ENCODE measurements at regions of chr10 and their contacts with region 1.

Region 1: DNA sequence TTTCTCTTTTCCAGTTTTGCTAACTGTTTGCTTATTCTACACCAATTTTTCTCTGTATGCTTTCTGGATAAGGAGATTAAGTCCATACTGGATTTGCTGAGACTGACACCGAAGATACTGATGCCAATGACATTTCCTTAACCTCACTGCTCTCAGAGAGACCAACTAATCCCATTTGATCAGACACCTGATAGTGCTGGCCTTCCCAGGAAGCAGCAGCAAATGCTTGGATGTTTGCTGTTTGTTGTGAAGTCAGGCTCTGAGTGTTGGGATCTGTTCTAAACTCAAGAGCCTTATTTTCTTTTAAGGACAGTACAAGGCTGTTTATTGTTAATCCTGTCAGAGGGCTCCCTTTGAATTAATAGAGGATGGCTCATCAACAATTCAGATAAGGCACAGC is 143.3 kb downstream of the ANK3 start:
- DNase-seq: no peak
- H3K4me3 ChIP-seq: no peak overlapping the region
- CTCF ChIP-seq: no peak
- POLR2A ChIP-seq: no peak

Region 2: DNA sequence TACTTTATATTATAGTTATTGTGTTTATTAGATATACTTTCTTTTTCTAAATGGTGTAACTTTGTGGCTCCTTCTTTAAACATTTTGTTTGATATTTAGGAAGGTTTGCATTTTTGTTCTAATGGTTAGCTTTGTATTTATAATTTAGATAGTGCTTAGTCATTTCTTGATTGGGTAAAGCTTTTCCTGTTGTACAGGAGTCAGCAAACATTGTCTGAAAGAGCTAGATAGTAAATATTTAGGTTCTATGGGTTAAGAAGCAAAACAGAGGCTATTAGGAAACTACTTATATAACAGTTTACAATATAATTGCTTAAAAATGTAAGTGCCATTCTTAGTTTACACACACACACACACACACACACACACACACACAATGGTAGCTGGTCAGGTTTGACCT is 269.5 kb before region 1 on chr10:
- intact Hi-C with region 1: loop called (anchors 5 kb)
- DNase-seq: no peak
- H3K4me3 ChIP-seq: no peak overlapping the region
- CTCF ChIP-seq: no peak
- POLR2A ChIP-seq: no peak

Region 3: GRCh38 chr10:60456053-60456452 is 209.7 kb after region 1 on chr10:
- intact Hi-C with region 1: no loop called
- DNase-seq: no peak
- H3K4me3 ChIP-seq: no peak overlapping the region
- CTCF ChIP-seq: no peak
- POLR2A ChIP-seq: no peak